Left cardiac atrium (tissue), 4 donors: ENCODE measurements at regions of chr14 and their contacts with region 1.

Region 1: GRCh38 chr14:75230140-75231045 is 48.2 kb upstream of the FOS start:
- DNase-seq: peak; percentile 61
- ATAC-seq: peak; percentile 66 to 90

Region 2: DNA sequence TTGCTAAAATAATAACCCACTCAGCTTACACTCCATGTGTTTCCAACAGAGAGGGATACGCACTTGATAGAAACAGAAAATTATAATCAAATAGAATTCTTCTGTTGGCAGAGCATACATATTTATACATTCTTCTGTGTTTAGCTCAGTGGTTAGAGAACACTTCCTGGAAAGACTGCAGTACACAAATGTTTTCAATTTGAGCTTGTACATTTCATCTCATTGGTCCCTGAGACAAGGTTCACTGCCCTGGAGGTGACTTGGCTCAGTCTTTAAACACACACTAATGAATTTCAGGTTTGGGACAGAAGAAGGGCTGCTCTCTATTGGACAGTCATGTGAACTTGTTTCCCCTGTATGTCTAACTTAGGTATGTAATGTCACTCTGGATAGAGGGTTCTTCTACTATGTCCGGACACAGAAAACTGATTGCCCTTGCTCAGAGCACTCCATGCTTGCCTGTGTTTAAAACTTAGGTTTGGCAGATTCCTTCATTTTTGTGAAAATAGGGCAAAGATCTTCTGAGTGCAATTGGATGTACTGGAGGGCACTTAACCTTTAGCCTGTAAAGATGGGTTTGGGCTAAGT is 377.4 kb before region 1 on chr14:
- intact Hi-C with region 1: no loop called
- DNase-seq: no peak
- ATAC-seq: peak in 1 of 2 donors; percentile 12

Region 3: DNA sequence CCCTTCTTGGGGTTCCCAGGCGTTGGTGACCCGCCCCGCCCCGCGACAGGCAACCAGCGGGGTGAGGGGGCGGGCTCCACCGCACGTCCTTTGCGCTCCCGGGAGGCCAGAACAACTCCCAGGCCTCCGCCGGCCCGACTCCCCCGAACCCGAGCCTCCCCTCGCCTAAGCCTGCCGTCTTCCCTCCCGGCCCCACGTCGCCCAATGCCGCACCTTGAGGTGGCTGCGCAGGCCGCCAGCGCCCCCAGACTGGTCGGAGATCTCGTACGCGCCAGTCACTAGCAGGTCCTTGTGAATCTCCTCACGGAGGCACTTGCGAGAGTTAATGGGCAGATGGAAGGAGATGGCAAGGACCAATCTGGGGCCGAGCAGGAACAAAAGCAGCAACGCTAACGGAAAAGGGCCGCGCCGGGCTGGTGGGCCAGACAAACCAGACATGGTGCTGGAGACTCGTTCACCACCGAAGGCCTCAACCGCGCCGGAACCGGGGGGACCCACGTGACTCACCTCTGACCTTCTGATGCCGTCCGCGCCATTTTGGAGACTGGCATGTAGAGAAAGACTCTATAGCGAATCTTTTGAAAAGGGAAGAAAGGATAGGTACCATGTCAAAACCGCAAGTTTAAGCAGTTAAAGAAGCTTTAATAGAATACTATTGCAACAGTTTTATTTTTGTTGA is 54.1 kb before region 1 on chr14 and contains the start of gene TMED10:
- intact Hi-C with region 1: loop called in 1 of 2 experiments (anchors 10 kb)
- DNase-seq: peak; percentile 92
- ATAC-seq: peak; percentile 95 to 97
- total RNA-seq, gene TMED10: 271 to 327 TPM

Region 4: GRCh38 chr14:75295491-75296345 is 65.3 kb after region 1 on chr14:
- intact Hi-C with region 1: loop called in 1 of 2 experiments (anchors 5 kb)
- DNase-seq: peak; percentile 85
- ATAC-seq: peak; percentile 14 to 27

Region 5: GRCh38 chr14:75307700-75308379 is 77.4 kb after region 1 on chr14:
- intact Hi-C with region 1: no loop called
- DNase-seq: peak; percentile 90
- ATAC-seq: peak; percentile 50 to 54

Region 6: GRCh38 chr14:75941030-75941429 is 710.6 kb after region 1 on chr14:
- intact Hi-C with region 1: no loop called
- DNase-seq: peak; percentile 39
- ATAC-seq: peak; percentile 70 to 85